Activated CD8-positive, alpha-beta memory T cell treated with anti-CD3 and anti-CD28 coated beads, Interleukin-2, amount 10 ng/mL, durations not matched to agents 7 days and 5 days (primary cell): ENCODE measurements at regions of chr6 and their contacts with region 1.

Region 1: GRCh38 chr6:142207265-142207877 is 60.3 kb downstream of the VTA1 start:
- DNase-seq: peak; percentile 43
- ATAC-seq: no peak
- H3K4me3 Mint-ChIP-seq: no peak overlapping the region
- H3K27ac Mint-ChIP-seq: peak overlapping the region; percentile 58
- H3K4me1 Mint-ChIP-seq: no peaks in the 10 kb centered on the region
- H3K27me3 Mint-ChIP-seq: no peaks in the 10 kb centered on the region

Region 2: GRCh38 chr6:142146828-142147662 is 60.3 kb before region 1 on chr6 and contains the starts of genes NMBR and VTA1:
- CTCF ChIA-PET with region 1: interaction called, 17 read pairs
- DNase-seq: peak; percentile 98
- ATAC-seq: peak; percentile 98
- H3K4me3 Mint-ChIP-seq: peak within 1 kb of the TSS; percentile 87
- H3K27ac Mint-ChIP-seq: peak within 1 kb of the TSS; percentile 87
- H3K4me1 Mint-ChIP-seq: peaks cover 50% of the 10 kb centered on the region
- H3K27me3 Mint-ChIP-seq: no peaks in the 10 kb centered on the region
- total RNA-seq, gene NMBR: not detected
- total RNA-seq, gene VTA1: 31.7 to 42.3 TPM

Region 3: GRCh38 chr6:142155895-142156757 is 51.2 kb before region 1 on chr6:
- CTCF ChIA-PET with region 1: interaction called, 10 read pairs
- DNase-seq: no peak
- ATAC-seq: peak; percentile 55
- H3K4me3 Mint-ChIP-seq: no peak overlapping the region
- H3K27ac Mint-ChIP-seq: no peak overlapping the region
- H3K4me1 Mint-ChIP-seq: peaks cover 18% of the 10 kb centered on the region
- H3K27me3 Mint-ChIP-seq: no peaks in the 10 kb centered on the region

Region 4: GRCh38 chr6:142195862-142196541 is 11.4 kb before region 1 on chr6:
- CTCF ChIA-PET with region 1: interaction called, 31 read pairs
- DNase-seq: no peak
- ATAC-seq: no peak
- H3K4me3 Mint-ChIP-seq: no peak overlapping the region
- H3K27ac Mint-ChIP-seq: no peak overlapping the region
- H3K4me1 Mint-ChIP-seq: peaks cover 8% of the 10 kb centered on the region
- H3K27me3 Mint-ChIP-seq: no peaks in the 10 kb centered on the region

Region 5: GRCh38 chr6:142380626-142381025 is 173.3 kb after region 1 on chr6:
- CTCF ChIA-PET with region 1: no interaction called
- DNase-seq: no peak
- ATAC-seq: no peak
- H3K4me3 Mint-ChIP-seq: no peak overlapping the region
- H3K27ac Mint-ChIP-seq: no peak overlapping the region
- H3K4me1 Mint-ChIP-seq: no peaks in the 10 kb centered on the region
- H3K27me3 Mint-ChIP-seq: peaks cover 33% of the 10 kb centered on the region